Head of caudate nucleus (tissue), 42 donors: ENCODE measurements at regions of chr19 and their contacts with region 1.

Region 1: GRCh38 chr19:1360818-1361461 is 22.8 kb upstream of the NDUFS7 start:
- DNase-seq: peak; percentile 81 to 96 (median 90)

Region 2: DNA sequence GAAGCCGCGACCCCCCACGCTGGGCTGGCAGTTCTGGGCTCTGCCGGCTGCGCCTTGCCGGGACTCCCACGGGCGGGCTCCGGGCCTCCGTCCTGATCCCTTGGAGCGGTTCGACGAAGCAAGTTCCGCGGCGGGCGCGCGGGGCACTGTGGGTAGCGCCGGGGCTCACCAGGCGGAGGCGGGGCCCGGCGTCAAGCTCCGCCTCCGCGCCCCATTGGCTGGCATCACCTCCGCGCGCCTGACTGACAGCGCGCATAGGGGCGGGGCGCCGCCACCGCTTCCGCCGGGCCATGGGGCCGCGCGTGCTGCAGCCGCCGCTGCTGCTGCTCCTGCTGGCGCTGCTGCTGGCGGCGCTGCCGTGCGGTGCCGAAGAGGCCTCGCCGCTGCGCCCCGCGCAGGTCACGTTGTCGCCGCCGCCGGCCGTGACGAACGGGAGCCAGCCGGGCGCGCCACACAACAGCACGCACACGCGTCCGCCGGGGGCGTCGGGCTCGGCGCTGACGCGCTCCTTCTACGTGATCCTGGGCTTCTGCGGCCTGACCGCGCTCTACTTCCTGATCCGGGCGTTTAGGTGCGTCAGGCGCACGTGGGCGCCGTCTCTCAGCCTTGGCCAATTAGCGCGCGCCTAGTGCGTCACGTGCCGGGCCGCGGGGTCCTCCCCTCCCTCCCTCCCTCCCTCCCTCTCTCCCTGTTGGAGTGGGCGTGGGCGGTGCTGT is 85.5 kb before region 1 on chr19 and contains the start of gene FAM174C:
- intact Hi-C with region 1: loop called (anchors 5 kb)
- DNase-seq: peak; percentile 92 to 100 (median 97)